ENCODE measurements at regions of chr9 and their contacts with region 1.

Region 1: DNA sequence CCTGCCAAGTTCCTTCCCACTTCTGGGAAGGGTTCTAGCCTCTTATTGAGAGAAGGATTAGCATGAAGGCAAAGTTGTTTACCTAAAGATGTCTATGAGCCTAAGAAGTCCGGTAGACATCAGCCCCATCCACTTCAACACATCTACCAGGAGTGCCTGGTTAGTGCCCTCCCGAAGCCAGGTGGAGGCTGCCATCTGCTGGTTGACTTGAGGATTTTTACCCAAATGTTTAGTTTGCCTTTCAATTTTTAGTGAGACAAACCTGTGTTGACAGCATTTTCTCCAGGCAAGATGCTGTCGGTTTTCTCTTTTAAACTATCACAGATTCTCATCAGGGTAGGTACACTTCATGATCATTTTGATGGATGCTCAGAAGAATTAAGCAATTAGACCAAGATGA is 83.6 kb upstream of the TNFSF8 start:
- DNase-seq: peak; percentile 72
- H3K4me3 ChIP-seq: no peak overlapping the region; a peak in 1 of 4 replicates
- H3K27ac ChIP-seq: no peak overlapping the region
- H3K4me1 ChIP-seq: 0 out of 4 replicates have a peak, but pooled peaks cover 0 to 5% of the 10 kb centered on the region in 2 experiments
- H3K27me3 ChIP-seq: no peaks in the 10 kb centered on the region
- CTCF ChIP-seq: peak; percentile 88
- EP300 ChIP-seq: no peak
- RAD21 ChIP-seq: peak; percentile 94

Region 2: GRCh38 chr9:114662081-114662989 is 351.7 kb before region 1 on chr9:
- CTCF ChIA-PET with region 1: interaction called, 11 read pairs
- POLR2A ChIA-PET with region 1: no interaction called
- DNase-seq: peak; percentile 77
- H3K4me3 ChIP-seq: no peak overlapping the region
- H3K27ac ChIP-seq: no peak overlapping the region
- H3K4me1 ChIP-seq: no peaks in the 10 kb centered on the region
- H3K27me3 ChIP-seq: no peaks in the 10 kb centered on the region; the same call in 1 of the 2 replicates
- CTCF ChIP-seq: peak; percentile 89
- EP300 ChIP-seq: no peak
- RAD21 ChIP-seq: peak; percentile 78

Region 3: DNA sequence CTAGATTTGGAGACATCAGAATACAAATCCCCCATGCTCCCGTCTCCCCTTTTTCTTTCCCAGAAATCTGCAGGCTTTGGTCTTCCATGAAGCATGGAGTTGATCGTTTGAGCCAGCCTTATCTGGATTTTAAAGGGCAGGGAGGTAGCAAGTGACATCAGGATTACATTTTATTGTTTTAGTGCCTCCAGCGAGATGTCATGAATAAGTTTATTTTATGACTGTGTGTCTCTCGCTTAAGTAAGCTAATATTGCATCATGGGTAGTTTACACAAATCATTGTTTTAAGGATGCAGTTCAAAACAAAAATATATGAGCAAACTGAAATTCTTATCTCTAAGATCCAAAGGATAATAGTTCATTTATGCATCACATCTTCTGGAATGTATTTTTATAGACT is 32.9 kb before region 1 on chr9:
- CTCF ChIA-PET with region 1: interaction called, 12 read pairs
- POLR2A ChIA-PET with region 1: no interaction called
- DNase-seq: no peak
- H3K4me3 ChIP-seq: no peak overlapping the region
- H3K27ac ChIP-seq: no peak overlapping the region
- H3K4me1 ChIP-seq: no peaks in the 10 kb centered on the region
- H3K27me3 ChIP-seq: peaks cover 17% of the 10 kb centered on the region; the same call in 1 of the 2 replicates
- CTCF ChIP-seq: no peak
- EP300 ChIP-seq: no peak
- RAD21 ChIP-seq: no peak

Region 4: GRCh38 chr9:115035841-115036612 is 22.0 kb after region 1 on chr9:
- CTCF ChIA-PET with region 1: interaction called, 12 read pairs
- POLR2A ChIA-PET with region 1: no interaction called
- DNase-seq: no peak
- H3K4me3 ChIP-seq: no peak overlapping the region
- H3K27ac ChIP-seq: peak overlapping the region; percentile 75 to 80; a peak in 3 of 4 replicates
- H3K4me1 ChIP-seq: peaks cover 0 to 21% of the 10 kb centered on the region in 2 experiments
- H3K27me3 ChIP-seq: no peaks in the 10 kb centered on the region
- CTCF ChIP-seq: no peak
- EP300 ChIP-seq: no peak; a peak in 1 of 4 replicates
- RAD21 ChIP-seq: no peak

Region 5: GRCh38 chr9:115524453-115525059 is 510.6 kb after region 1 on chr9:
- CTCF ChIA-PET with region 1: interaction called, 15 read pairs
- POLR2A ChIA-PET with region 1: no interaction called
- DNase-seq: peak; percentile 44
- H3K4me3 ChIP-seq: no peak overlapping the region; a peak in 1 of 4 replicates
- H3K27ac ChIP-seq: no peak overlapping the region
- H3K4me1 ChIP-seq: peaks cover 0 to 16% of the 10 kb centered on the region in 2 experiments; a peak in 2 of 4 replicates
- H3K27me3 ChIP-seq: no peaks in the 10 kb centered on the region
- CTCF ChIP-seq: peak; percentile 86
- EP300 ChIP-seq: peak in 1 of 2 experiments; percentile 26; a peak in 1 of 4 replicates
- RAD21 ChIP-seq: peak; percentile 95

Measured in SK-N-SH (cell line).